PC-9 (cell line): ENCODE measurements at regions of chr2 and their contacts with region 1.

Region 1: GRCh38 chr2:26745609-26746327 is 18.3 kb upstream of the SLC35F6 start:
- DNase-seq: peak; percentile 63 to 71
- H3K4me3 ChIP-seq: no peak overlapping the region
- H3K27ac ChIP-seq: no peak overlapping the region
- H3K4me1 ChIP-seq: no peaks in the 10 kb centered on the region
- H3K27me3 ChIP-seq: no peaks in the 10 kb centered on the region
- CTCF ChIP-seq: peak; percentile 98

Region 2: DNA sequence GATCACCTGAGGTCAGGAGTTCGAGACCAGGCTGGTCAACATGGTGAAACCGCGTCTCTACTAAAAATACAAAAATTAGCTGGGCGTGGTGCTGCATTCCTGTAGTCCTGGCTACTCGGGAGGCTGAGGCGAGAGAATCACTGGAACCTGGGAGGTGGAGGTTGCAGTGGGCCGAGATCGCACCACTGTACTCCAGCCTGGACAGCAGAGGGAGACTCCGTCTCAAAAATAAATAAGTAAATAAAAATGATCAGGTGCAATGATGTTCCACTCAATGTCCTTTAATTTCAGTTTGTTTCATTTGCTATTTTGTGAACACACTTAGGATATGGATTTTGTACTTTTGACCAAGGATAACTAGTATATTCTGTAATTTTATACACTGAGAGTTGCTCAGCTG is 510.7 kb before region 1 on chr2:
- CTCF ChIA-PET with region 1: no interaction called
- POLR2A ChIA-PET with region 1: no interaction called
- intact Hi-C with region 1: loop called (anchors 10 kb)
- DNase-seq: no peak
- H3K4me3 ChIP-seq: no peak overlapping the region
- H3K27ac ChIP-seq: no peak overlapping the region
- H3K4me1 ChIP-seq: peaks cover 2% of the 10 kb centered on the region
- H3K27me3 ChIP-seq: no peaks in the 10 kb centered on the region
- CTCF ChIP-seq: peak; percentile 55